ENCODE measurements at regions of chr6 and their contacts with region 1.

Region 1: DNA sequence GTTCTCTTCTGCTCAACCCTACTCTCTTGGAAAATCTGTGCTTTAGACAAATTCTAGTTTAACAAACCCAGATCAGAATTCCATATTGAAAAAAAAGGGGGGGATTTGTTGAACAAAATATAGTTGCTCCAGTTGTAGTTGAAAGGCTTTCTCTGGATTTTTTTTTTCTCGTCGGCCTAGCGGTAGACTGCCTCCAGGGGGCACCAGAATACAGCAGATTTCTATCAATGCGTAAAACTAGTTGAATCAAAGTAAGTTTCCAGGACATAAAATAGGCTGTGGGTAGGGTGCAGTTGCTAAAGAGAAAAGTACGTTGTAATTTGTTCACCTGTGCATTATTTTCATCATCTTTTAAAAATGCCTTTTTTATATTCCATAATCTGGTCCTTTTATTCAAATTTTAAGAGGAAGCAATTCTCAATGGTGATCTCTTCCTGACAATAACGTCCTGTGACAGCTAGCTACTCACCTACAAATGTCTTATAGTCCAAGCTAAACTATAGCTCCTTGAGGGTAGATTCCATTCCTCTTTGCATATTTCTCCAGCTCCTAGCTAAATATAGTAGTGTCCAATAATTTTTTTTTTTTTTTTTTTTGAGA is 105.4 kb downstream of the PERP start:
- DNase-seq: peak; percentile 76
- H3K4me3 Mint-ChIP-seq: no peak overlapping the region
- H3K27ac Mint-ChIP-seq: no peak overlapping the region
- H3K4me1 Mint-ChIP-seq: peaks cover 14% of the 10 kb centered on the region
- H3K27me3 Mint-ChIP-seq: peaks cover 3% of the 10 kb centered on the region

Region 2: GRCh38 chr6:137271245-137272183 is 730.3 kb before region 1 on chr6:
- CTCF ChIA-PET with region 1: interaction called, 3 read pairs
- POLR2A ChIA-PET with region 1: no interaction called
- intact Hi-C with region 1: loop called (anchors 10 kb)
- DNase-seq: no peak
- H3K4me3 Mint-ChIP-seq: no peak overlapping the region
- H3K27ac Mint-ChIP-seq: no peak overlapping the region
- H3K4me1 Mint-ChIP-seq: peaks cover 10% of the 10 kb centered on the region
- H3K27me3 Mint-ChIP-seq: peaks cover 5% of the 10 kb centered on the region

Region 3: GRCh38 chr6:137954253-137954652 is 47.6 kb before region 1 on chr6:
- CTCF ChIA-PET with region 1: no interaction called
- POLR2A ChIA-PET with region 1: no interaction called
- intact Hi-C with region 1: no loop called
- DNase-seq: no peak
- H3K4me3 Mint-ChIP-seq: no peak overlapping the region
- H3K27ac Mint-ChIP-seq: no peak overlapping the region
- H3K4me1 Mint-ChIP-seq: peaks cover 16% of the 10 kb centered on the region
- H3K27me3 Mint-ChIP-seq: no peaks in the 10 kb centered on the region

Region 4: DNA sequence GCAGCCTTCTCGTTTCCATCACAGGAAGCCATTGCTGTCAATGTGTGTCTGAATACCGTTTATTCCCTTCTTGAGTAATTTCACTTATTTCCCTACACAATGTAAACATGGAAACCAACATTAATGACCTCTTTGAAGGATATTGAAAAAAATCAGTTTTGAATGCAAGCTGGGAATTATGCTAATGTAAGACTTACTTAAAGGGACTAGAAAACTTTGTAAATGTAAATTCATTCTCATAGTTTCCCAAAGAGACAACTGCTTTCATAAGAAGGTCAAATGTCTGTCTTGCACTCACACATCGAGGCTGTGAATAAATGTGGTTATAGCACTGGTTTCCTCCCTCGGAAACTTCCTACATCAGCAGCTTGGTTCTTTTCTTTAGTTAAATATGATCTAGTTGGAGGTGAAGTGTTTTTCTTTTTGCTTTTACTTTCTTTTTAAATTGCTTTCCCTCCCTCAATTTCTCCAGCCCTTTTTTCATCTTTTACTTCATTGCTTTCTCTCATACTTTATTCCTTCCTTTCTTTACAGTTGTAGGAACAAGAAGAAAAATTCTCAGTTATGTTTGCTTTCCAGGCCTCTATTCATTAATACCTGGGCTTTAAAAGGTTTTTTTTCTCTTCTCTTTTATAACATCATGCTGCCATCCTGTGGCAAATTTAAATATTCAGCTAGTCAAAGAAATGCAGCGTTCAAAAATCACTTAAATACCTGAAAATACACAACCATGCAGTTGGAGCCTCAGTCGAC is 26.5 kb before region 1 on chr6:
- CTCF ChIA-PET with region 1: interaction called, 19 read pairs
- POLR2A ChIA-PET with region 1: no interaction called
- intact Hi-C with region 1: no loop called
- DNase-seq: peak; percentile 38
- H3K4me3 Mint-ChIP-seq: peak overlapping the region; percentile 64
- H3K27ac Mint-ChIP-seq: peak overlapping the region; percentile 84
- H3K4me1 Mint-ChIP-seq: peaks cover 59% of the 10 kb centered on the region
- H3K27me3 Mint-ChIP-seq: no peaks in the 10 kb centered on the region

Region 5: DNA sequence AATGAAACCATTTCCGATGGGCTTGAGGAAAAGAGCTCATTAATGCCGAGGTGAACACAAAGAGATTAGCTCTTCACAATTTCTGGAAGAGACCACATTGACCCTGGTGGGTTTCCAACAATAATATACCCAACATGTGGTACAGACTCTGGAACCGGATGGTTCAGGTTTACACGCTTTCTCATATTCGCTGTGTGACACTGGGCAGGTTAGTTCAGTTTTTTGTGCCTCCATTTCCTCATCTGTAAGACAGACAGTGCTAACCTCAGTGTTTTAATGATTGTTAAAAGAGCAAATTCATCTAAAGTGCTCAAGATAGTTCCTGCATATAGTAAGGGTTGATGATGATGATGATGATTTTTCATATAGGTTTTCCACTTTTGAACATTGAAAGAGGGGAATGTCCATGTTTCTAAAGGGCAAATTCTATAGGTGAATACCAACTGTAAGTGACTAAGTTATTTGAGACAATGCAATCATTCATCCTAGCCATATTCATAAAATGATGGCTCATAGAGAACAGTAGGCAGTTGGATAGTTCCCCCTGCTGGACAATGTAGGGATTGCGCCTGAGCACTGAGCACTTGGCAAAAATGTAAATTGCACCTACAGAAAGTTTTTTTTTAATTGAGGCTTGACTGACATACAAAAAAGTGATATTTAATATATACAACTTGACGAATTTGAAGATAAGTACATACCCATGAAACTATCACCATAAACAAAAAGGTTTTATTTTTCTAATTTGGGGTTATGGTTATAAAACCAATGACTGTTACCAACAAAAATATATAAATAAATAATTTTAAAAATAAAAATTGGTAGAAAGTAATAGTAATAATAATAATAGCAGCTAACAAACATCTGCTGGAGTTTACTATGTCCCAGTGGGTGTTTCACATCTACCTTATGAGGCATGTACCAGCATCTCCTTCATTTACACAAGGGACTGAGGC is 107.5 kb after region 1 on chr6:
- CTCF ChIA-PET with region 1: interaction called, 89 read pairs
- POLR2A ChIA-PET with region 1: interaction called, 4 read pairs
- intact Hi-C with region 1: loop called (anchors 1 kb)
- DNase-seq: peak; percentile 89
- H3K4me3 Mint-ChIP-seq: no peak overlapping the region
- H3K27ac Mint-ChIP-seq: no peak overlapping the region
- H3K4me1 Mint-ChIP-seq: peaks cover 21% of the 10 kb centered on the region
- H3K27me3 Mint-ChIP-seq: peaks cover 12% of the 10 kb centered on the region

Region 6: GRCh38 chr6:138334000-138334399 is 332.1 kb after region 1 on chr6:
- CTCF ChIA-PET with region 1: no interaction called
- POLR2A ChIA-PET with region 1: no interaction called
- intact Hi-C with region 1: no loop called
- DNase-seq: no peak
- H3K4me3 Mint-ChIP-seq: no peak overlapping the region
- H3K27ac Mint-ChIP-seq: no peak overlapping the region
- H3K4me1 Mint-ChIP-seq: no peaks in the 10 kb centered on the region
- H3K27me3 Mint-ChIP-seq: peaks cover 4% of the 10 kb centered on the region

Region 7: GRCh38 chr6:138403801-138404661 is 402.2 kb after region 1 on chr6 and contains the start of gene HEBP2:
- CTCF ChIA-PET with region 1: no interaction called
- POLR2A ChIA-PET with region 1: no interaction called
- intact Hi-C with region 1: loop called (anchors 10 kb)
- DNase-seq: peak; percentile 97
- H3K4me3 Mint-ChIP-seq: peak within 1 kb of the TSS; percentile 79
- H3K27ac Mint-ChIP-seq: peak within 1 kb of the TSS; percentile 58
- H3K4me1 Mint-ChIP-seq: peaks cover 23% of the 10 kb centered on the region
- H3K27me3 Mint-ChIP-seq: no peaks in the 10 kb centered on the region
- total RNA-seq, gene HEBP2: 49.5 to 49.6 TPM

Measured in activated CD4-positive, alpha-beta memory T cell treated with anti-CD3 and anti-CD28 coated beads for 36 hours (primary cell).